ENCODE measurements at regions of chr1 and their contacts with region 1.

Region 1: GRCh38 chr1:230632273-230632873 is 9.9 kb upstream of the COG2 start:
- DNase-seq: peak; percentile 56 to 65
- H3K4me3 ChIP-seq: no peak overlapping the region
- H3K4me3 Mint-ChIP-seq: no peak overlapping the region
- H3K27ac Mint-ChIP-seq: no peak overlapping the region
- H3K4me1 ChIP-seq: no peaks in the 10 kb centered on the region
- H3K4me1 Mint-ChIP-seq: no peaks in the 10 kb centered on the region
- H3K27me3 ChIP-seq: no peaks in the 10 kb centered on the region
- H3K27me3 Mint-ChIP-seq: no peaks in the 10 kb centered on the region
- CTCF ChIP-seq: peak; percentile 75 to 84

Region 2: DNA sequence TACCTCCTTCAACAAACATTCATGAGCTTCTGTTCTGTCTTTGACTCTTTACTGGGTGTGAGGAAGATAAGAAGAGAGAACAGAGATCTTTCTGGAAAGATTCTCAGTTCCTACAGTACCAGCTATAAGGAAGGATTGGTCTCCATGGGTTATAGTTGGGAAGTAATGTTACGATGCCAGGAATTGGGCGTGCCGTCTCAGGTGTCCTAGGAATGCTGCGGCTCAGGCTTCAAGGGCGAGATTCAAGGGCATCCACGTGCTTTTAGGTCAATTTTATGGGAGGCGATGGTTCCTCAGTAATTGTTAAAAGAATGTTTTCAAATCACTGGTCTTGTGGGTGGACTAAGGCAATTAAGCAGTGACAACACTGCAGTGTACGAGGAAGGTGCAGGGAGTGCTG is 37.2 kb after region 1 on chr1:
- CTCF ChIA-PET with region 1: no interaction called
- POLR2A ChIA-PET with region 1: no interaction called
- intact Hi-C with region 1: no loop called
- DNase-seq: no peak
- H3K4me3 ChIP-seq: no peak overlapping the region
- H3K4me3 Mint-ChIP-seq: no peak overlapping the region
- H3K27ac Mint-ChIP-seq: no peak overlapping the region
- H3K4me1 ChIP-seq: no peaks in the 10 kb centered on the region
- H3K4me1 Mint-ChIP-seq: no peaks in the 10 kb centered on the region
- H3K27me3 ChIP-seq: no peaks in the 10 kb centered on the region
- H3K27me3 Mint-ChIP-seq: no peaks in the 10 kb centered on the region
- CTCF ChIP-seq: no peak

Region 3: GRCh38 chr1:230760360-230760827 is 128.0 kb after region 1 on chr1:
- CTCF ChIA-PET with region 1: no interaction called
- POLR2A ChIA-PET with region 1: no interaction called
- intact Hi-C with region 1: loop called (anchors 1 kb)
- DNase-seq: peak; percentile 75 to 80
- H3K4me3 ChIP-seq: no peak overlapping the region
- H3K4me3 Mint-ChIP-seq: no peak overlapping the region
- H3K27ac Mint-ChIP-seq: peak overlapping the region; percentile 22
- H3K4me1 ChIP-seq: peaks cover 14% of the 10 kb centered on the region
- H3K4me1 Mint-ChIP-seq: peaks cover 29% of the 10 kb centered on the region
- H3K27me3 ChIP-seq: no peaks in the 10 kb centered on the region
- H3K27me3 Mint-ChIP-seq: no peaks in the 10 kb centered on the region
- CTCF ChIP-seq: peak in 1 of 2 experiments; percentile 47

Region 4: DNA sequence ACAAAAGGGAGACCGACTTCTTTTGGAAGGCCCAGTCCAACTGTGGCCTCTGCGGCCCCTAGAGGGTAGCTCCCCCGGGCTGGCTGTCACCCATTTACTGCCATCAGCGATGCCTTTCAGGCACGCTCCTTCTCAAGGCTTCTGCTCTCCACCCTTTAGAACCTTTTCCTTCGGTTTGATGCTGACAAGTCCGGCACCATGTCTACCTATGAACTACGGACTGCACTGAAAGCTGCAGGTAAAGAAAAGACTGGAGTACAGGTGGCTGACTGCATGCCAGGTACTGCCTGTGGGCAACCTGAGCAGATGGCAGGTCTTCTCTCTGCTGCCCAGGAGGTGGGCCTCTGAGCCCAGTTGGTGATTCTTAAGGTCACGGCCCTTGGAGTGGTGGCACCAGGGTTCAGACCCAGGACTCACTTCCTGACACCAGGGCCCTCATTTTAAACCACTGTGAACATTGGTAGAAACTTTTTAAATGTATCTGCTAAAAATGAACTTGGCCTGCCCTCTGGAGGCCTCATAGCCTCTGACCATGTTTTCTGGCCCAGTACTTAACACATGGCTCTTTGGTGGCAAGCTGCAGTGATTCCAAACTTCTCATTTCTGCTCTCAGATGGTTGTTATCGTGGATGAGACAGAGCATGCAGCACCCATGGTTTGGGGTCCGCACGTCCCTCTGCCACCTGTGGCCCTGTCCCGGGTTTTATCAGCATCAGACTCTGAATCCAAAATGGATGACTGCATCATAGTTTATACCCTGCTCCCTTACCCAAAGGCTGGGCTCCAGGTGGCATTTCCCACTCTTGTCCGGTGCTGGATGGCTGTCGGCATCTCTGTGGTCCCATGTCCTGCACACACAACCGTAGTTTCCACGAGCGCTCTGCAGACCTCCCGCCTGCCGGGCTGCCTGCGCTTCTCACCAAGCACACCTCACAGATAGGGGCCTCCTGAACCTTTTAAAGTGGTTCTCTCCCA is 160.6 kb after region 1 on chr1:
- CTCF ChIA-PET with region 1: no interaction called
- POLR2A ChIA-PET with region 1: no interaction called
- intact Hi-C with region 1: loop called (anchors 1 kb)
- DNase-seq: peak in 1 of 2 experiments; percentile 15
- H3K4me3 ChIP-seq: no peak overlapping the region
- H3K4me3 Mint-ChIP-seq: no peak overlapping the region
- H3K27ac Mint-ChIP-seq: no peak overlapping the region
- H3K4me1 ChIP-seq: no peaks in the 10 kb centered on the region
- H3K4me1 Mint-ChIP-seq: peaks cover 7% of the 10 kb centered on the region
- H3K27me3 ChIP-seq: no peaks in the 10 kb centered on the region
- H3K27me3 Mint-ChIP-seq: no peaks in the 10 kb centered on the region
- CTCF ChIP-seq: peak; percentile 26 to 28